Natural killer cell (primary cell): ENCODE measurements at regions of chr21 and their contacts with region 1.

Region 1: GRCh38 chr21:37267269-37268184 is at the start of gene VPS26C:
- DNase-seq: peak; percentile 94 to 99
- ATAC-seq: peak; percentile 85 to 95 (median 86)
- H3K4me3 ChIP-seq: peak within 1 kb of the TSS; percentile 90
- H3K4me3 Mint-ChIP-seq: peak within 1 kb of the TSS; percentile 97
- H3K27ac ChIP-seq: peak within 1 kb of the TSS; percentile 99
- H3K27ac Mint-ChIP-seq: peak within 1 kb of the TSS; percentile 95 to 99
- H3K4me1 ChIP-seq: peaks cover 22% of the 10 kb centered on the region
- H3K4me1 Mint-ChIP-seq: peaks cover 32 to 52% of the 10 kb centered on the region in 2 donors
- H3K27me3 ChIP-seq: no peaks in the 10 kb centered on the region
- H3K27me3 Mint-ChIP-seq: no peaks in the 10 kb centered on the region
- CTCF ChIP-seq: no peak
- total RNA-seq, gene VPS26C: 71.1 to 84.7 (median 72.2) TPM

Region 2: GRCh38 chr21:35366394-35367080 is 1901.0 kb before region 1 on chr21:
- intact Hi-C with region 1: no loop called
- DNase-seq: no peak
- ATAC-seq: no peak
- H3K4me3 ChIP-seq: no peak overlapping the region
- H3K4me3 Mint-ChIP-seq: no peak overlapping the region
- H3K27ac ChIP-seq: no peak overlapping the region
- H3K27ac Mint-ChIP-seq: no peak overlapping the region
- H3K4me1 ChIP-seq: no peaks in the 10 kb centered on the region
- H3K4me1 Mint-ChIP-seq: no peaks in the 10 kb centered on the region
- H3K27me3 ChIP-seq: no peaks in the 10 kb centered on the region
- H3K27me3 Mint-ChIP-seq: peaks cover 9% of the 10 kb centered on the region in 2 donors
- CTCF ChIP-seq: no peak

Region 3: GRCh38 chr21:37358397-37358796 is 90.9 kb after region 1 on chr21:
- intact Hi-C with region 1: no loop called
- DNase-seq: no peak
- ATAC-seq: no peak
- H3K4me3 ChIP-seq: no peak overlapping the region
- H3K4me3 Mint-ChIP-seq: no peak overlapping the region
- H3K27ac ChIP-seq: no peak overlapping the region
- H3K27ac Mint-ChIP-seq: no peak overlapping the region
- H3K4me1 ChIP-seq: no peaks in the 10 kb centered on the region
- H3K4me1 Mint-ChIP-seq: peaks cover 0 to 9% of the 10 kb centered on the region in 2 donors
- H3K27me3 ChIP-seq: no peaks in the 10 kb centered on the region
- H3K27me3 Mint-ChIP-seq: peaks cover 12 to 29% of the 10 kb centered on the region in 2 donors
- CTCF ChIP-seq: no peak

Region 4: DNA sequence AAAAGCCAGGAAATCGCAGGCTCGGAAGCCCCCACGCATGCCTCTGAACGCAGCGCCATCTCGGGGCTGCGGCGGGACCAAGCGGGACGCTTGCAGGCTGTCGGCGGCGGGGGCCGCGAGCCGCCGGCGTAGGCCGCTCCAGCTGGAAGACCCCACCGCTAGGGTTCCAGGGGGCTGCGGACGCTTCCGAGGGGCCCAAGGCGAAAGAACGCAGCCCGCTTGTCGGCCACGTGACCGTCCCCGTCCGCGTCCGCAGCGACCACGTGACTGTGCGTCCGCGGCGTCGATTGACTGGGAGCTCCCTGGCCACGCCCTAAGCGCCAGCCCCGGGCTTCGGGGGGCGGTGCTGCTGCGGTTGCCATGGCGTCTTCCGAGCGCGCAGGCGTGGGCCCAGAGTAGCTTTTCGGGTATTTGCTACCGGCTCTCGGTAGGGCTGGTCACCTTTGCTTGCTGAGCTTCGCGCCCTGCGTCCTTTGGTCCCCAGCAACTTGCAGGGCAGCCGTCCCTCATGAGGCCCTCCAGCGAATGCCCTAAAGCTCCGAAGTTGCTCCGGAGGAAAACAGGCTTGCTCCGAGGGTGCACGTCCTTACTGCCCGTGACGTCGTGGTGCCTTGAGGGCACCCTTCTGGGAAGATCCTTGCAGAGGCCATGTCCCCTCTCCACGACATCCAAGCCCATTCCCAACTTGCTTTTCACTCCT is 296.3 kb after region 1 on chr21:
- intact Hi-C with region 1: loop called (anchors 1 kb)
- DNase-seq: peak; percentile 92 to 97
- ATAC-seq: peak; percentile 73 to 94 (median 87)
- H3K4me3 ChIP-seq: peak overlapping the region; percentile 87
- H3K4me3 Mint-ChIP-seq: peak overlapping the region; percentile 97
- H3K27ac ChIP-seq: peak overlapping the region; percentile 95
- H3K27ac Mint-ChIP-seq: peak overlapping the region; percentile 98 to 100
- H3K4me1 ChIP-seq: peaks cover 15% of the 10 kb centered on the region
- H3K4me1 Mint-ChIP-seq: peaks cover 18 to 28% of the 10 kb centered on the region in 2 donors
- H3K27me3 ChIP-seq: no peaks in the 10 kb centered on the region
- H3K27me3 Mint-ChIP-seq: peaks cover 0 to 3% of the 10 kb centered on the region in 2 donors
- CTCF ChIP-seq: peak; percentile 37